ENCODE measurements at regions of chr10 and their contacts with region 1.

Region 1: DNA sequence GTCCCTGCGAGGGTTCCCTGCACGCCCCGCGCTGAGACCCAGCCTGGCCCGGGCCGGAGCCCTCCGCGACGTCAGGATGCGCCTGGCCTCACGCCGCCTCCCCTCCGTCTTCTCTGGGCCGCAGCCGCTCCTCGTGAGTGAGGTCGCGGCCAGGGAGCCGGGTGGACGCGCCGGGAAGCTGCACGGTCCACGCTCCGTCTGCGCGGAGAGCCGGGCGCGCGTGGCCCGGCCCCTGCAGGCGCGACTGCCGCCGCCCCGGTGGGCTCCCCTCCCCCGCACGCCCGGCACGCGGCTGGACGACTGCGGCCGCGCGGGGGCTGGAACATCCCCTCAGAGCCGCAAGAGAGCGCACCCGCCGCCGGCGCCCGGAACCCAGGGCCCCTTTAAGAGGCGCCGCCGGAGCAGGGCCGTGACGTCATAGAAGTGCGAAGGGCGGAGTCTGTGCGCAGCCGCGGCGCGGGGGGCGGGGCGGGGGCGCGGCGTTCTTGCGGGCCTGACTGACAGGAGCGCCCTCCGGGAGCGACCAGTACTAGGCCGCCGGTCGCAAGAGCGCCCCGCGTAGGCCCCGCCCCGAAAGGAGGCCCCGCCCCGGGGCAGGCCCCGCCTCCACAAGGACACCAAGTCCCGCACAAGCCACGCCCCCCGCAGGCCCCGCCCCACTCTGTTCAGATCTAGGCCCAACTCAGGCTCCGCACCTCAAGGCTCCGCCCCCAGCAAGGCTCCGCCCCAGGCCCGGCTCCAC is 445 bp upstream of the INPP5A start:
- DNase-seq: peak; percentile 100
- ATAC-seq: peak; percentile 96 to 97
- H3K4me3 ChIP-seq: peak overlapping the region; percentile 38
- H3K27ac ChIP-seq: peak overlapping the region; percentile 65
- H3K4me1 ChIP-seq: peaks cover 13% of the 10 kb centered on the region
- H3K27me3 ChIP-seq: no peaks in the 10 kb centered on the region

Region 2: DNA sequence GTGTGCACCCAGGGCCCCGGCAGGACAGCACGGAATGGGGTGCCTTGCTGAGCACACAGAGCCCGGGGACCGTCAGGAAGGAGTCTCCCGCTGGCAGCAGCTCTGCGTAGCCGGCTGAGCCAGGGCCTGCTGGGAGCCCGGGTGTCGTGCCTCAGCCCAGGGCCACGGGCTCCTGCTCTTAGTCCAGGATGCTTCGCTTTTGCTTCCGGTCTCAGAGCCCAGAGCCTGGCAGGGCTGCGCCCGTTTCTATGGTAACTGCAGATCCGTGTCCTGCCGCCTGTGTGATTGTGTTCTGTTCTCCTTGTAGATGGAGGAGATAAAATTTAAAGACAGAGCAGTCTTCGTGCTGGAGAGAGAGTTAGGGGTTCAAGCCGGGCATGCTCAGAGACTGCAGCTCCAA is 404.1 kb before region 1 on chr10:
- intact Hi-C with region 1: no loop called
- DNase-seq: peak in 1 of 3 donors; percentile 44
- ATAC-seq: no peak
- H3K4me3 ChIP-seq: no peak overlapping the region
- H3K27ac ChIP-seq: no peak overlapping the region
- H3K4me1 ChIP-seq: no peaks in the 10 kb centered on the region
- H3K27me3 ChIP-seq: no peaks in the 10 kb centered on the region

Region 3: DNA sequence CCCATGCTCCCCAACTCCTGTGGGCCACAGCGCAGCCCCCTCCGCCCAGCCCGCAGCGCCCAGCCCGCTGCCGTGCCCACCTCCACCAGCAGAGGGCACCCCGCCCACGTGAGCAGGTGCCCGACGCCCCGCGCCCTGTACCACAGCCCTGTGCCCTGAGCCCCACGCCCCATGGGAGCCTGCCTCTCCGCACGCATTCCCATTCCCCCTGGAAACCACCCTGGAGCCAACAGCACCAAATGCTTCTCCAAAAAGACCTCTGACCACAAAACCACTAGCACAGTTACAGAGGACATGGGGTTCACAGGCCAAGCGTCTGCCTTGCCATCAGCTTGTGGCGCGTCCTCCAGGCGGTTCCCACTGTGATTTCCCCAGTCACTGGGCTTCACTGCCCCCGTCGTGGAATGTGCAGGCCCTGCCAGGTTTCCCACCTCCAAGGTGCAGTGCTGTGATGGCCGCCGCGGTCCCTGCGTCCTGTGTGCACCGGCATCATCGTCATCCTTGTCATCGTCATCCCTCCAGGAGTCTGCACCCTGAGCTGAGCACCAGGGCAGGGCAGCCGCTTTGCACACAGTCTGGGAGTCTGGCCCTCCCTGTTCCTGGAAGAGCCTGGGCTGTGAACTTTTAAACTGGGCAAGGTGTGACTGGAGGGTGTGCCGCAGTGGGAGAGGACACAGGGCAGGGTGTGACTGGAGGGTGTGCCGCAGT is 78.4 kb before region 1 on chr10:
- intact Hi-C with region 1: loop called in 3 of 4 experiments (anchors 5 to 10 kb)
- DNase-seq: peak; percentile 50 to 87 (median 86)
- ATAC-seq: peak; percentile 46 to 66
- H3K4me3 ChIP-seq: no peak overlapping the region
- H3K27ac ChIP-seq: no peak overlapping the region
- H3K4me1 ChIP-seq: peaks cover 4% of the 10 kb centered on the region
- H3K27me3 ChIP-seq: no peaks in the 10 kb centered on the region

Region 4: DNA sequence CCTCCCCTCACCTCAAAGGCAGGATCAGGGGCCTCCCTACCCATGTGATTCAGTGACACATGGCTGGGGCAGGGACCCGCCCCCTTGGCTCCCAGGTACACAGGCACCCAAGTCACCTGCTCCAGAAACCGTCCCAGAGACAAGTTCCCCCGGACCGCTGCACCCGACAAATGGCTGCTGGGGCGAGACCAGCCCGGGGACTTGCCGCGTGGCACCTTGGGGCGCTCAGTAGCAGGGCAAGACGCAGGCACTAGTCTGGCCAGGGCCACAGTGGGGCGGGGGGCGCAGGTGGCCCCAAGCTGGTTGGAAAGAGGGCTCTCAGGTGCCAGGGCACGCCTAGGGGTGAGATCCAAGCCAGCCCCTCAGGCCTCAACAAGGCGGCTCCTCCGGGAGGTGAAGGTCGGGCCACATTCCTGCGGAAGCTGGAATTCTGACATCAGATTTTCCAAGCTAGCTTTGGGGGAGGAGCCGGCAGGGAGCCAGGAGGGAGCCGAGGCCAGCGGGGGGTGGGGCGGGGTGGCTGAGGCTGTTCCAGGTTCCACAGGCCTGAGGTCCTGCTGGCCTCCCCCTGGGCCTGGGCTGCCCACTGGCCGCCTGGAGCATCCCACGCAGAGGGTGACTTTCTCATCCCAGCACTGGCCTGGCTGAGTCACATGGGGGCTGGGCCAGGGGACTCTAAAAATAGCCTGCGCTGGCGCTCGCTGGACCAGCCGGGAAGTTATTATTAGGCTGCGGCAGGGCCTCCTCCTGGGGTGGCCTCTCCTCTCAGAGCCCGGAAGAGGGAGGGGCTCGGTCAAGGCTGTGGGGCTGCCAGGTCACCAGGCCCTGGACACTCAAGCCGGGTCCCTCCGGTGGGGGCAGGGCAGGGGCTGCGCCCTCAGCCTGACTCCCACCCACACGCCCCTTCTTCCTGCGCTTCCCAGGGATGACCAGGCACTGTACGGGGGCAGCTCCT is 20.1 kb before region 1 on chr10:
- intact Hi-C with region 1: loop called in 1 of 4 experiments (anchors 2 kb)
- DNase-seq: peak; percentile 96 to 97 (median 96)
- ATAC-seq: peak; percentile 91 to 94
- H3K4me3 ChIP-seq: no peak overlapping the region
- H3K27ac ChIP-seq: peak overlapping the region; percentile 55
- H3K4me1 ChIP-seq: peaks cover 34% of the 10 kb centered on the region
- H3K27me3 ChIP-seq: no peaks in the 10 kb centered on the region

Region 5: GRCh38 chr10:132575356-132576201 is 38.4 kb after region 1 on chr10:
- intact Hi-C with region 1: loop called in 1 of 4 experiments (anchors 5 kb)
- DNase-seq: peak in 2 of 3 donors; percentile 77 to 87
- ATAC-seq: peak; percentile 66 to 78
- H3K4me3 ChIP-seq: no peak overlapping the region
- H3K27ac ChIP-seq: peak overlapping the region; percentile 10
- H3K4me1 ChIP-seq: peaks cover 27% of the 10 kb centered on the region
- H3K27me3 ChIP-seq: no peaks in the 10 kb centered on the region

Measured in right cardiac atrium (tissue), 5 donors.